ENCODE measurements at regions of chr12 and their contacts with region 1.

Region 1: GRCh38 chr12:11862798-11863197 is 207.9 kb upstream of the BCL2L14 start:
- DNase-seq: peak in 1 of 2 donors; percentile 51
- ATAC-seq: peak; percentile 58 to 82 (median 72)
- H3K4me3 ChIP-seq: peak overlapping the region in 2 of 10 donors; percentile 13 to 14
- H3K27ac ChIP-seq: peak overlapping the region; percentile 59 to 97 (median 86)
- H3K4me1 ChIP-seq: peaks cover 19 to 57% (median 53%) of the 10 kb centered on the region in 9 donors
- H3K27me3 ChIP-seq: no peaks in the 10 kb centered on the region
- CTCF ChIP-seq: no peak

Region 2: DNA sequence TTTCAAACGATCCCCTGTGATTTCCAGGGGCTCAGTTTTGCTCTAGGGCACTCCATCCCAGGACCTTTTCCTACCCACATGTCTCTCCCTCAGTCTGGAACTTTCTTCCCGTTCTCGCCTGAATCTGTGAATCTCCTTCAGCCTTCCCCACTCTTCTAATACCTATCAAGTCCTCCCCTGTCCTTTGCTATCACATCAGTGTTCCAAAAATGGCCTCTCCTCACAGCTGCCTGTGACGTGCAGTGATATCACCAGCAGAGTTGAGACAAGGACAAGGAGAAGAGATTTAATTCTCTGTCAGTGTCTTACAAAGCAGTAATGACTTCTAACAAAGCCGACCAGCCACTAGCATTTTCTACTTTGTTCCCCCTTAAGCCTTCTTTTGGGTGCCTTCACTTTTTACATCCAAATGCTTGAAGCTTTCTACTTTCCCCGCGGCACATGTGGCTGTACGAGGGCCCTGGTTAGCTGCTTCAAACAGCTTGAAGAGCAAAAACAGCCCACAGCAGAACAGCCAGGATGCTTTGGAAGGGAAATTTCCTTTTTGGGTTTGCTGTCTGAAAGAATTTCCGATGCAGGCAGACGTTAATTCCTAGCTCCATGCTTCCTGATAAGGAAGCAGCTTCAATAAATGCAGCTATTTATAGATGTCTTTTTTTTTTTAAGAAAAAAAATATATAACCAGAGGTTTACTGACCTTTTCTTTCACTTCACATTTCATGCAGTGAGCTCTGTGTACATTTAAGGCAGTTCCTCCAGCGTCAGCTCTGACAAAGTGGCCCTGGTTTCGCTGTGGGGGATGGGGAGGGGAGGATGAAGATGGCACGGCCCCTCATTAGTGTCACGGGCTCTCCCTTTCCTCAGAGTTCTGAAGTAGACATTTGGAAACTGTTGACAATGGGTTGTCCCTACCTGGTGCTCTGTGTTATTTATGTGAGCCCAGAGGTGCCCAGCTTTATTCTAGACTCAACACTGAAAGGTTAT is 104.0 kb before region 1 on chr12:
- intact Hi-C with region 1: loop called in 1 of 10 experiments (anchors 5 kb)
- DNase-seq: peak in 1 of 2 donors; percentile 67
- ATAC-seq: peak; percentile 63 to 83 (median 79)
- H3K4me3 ChIP-seq: peak overlapping the region in 2 of 10 donors; percentile 2 to 5
- H3K27ac ChIP-seq: peak overlapping the region; percentile 72 to 92 (median 88)
- H3K4me1 ChIP-seq: peaks cover 13 to 91% (median 86%) of the 10 kb centered on the region in 9 donors
- H3K27me3 ChIP-seq: no peaks in the 10 kb centered on the region
- CTCF ChIP-seq: no peak

Region 3: GRCh38 chr12:11765817-11766794 is 96.7 kb before region 1 on chr12:
- intact Hi-C with region 1: loop called in 2 of 10 experiments (anchors 5 kb)
- DNase-seq: peak in 1 of 2 donors; percentile 67
- ATAC-seq: peak; percentile 59 to 85 (median 78)
- H3K4me3 ChIP-seq: peak overlapping the region in 4 of 10 donors; percentile 5 to 21 (median 12)
- H3K27ac ChIP-seq: peak overlapping the region; percentile 5 to 94 (median 80)
- H3K4me1 ChIP-seq: peaks cover 8 to 100% (median 66%) of the 10 kb centered on the region in 9 donors
- H3K27me3 ChIP-seq: no peaks in the 10 kb centered on the region
- CTCF ChIP-seq: no peak

Region 4: DNA sequence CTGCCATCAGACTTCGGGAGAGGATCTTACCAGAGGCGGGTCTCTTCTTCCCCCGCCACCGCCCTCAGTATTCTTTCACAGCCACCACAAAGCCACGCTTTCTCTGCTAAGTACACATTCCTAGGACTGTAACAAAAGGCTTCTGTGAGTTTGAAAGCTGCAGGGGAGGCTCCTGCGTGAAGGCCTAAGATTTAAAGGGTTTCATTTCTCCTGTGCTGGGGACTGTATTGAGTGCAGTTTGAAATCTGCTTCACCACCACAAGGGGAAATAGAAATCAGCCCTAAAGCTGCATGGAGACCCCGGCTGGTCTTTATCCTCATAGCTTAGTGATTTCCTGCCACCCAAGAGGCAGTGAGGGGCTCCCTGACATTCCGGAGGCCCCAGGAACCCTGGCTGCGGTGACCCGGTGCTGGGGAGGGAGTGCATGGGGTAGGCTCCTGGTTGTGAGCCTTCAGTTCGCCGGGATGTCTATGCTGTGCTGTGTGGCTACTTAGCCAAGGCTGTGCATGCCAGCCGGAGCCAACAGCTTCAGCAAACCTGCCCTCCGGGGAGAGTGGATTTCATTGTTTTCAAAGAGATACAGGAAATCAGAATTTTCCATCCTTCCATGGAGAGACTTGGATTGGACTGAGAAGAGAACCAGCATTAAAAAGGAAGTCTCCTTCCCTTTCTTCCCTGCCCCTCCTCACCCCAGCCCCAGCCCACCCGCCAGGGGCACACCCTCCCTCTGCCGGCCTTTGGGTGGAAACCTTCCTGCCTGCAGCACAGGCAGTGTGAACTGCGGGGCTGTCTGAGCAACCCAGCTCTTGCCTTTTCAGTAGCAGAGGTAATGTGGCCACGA is 50.0 kb before region 1 on chr12:
- intact Hi-C with region 1: loop called in 1 of 10 experiments (anchors 10 kb)
- DNase-seq: peak; percentile 39 to 53
- ATAC-seq: peak; percentile 50 to 84 (median 78)
- H3K4me3 ChIP-seq: peak overlapping the region in 7 of 10 donors; percentile 21 to 40 (median 34)
- H3K27ac ChIP-seq: peak overlapping the region; percentile 62 to 91 (median 78)
- H3K4me1 ChIP-seq: peaks cover 24 to 71% (median 52%) of the 10 kb centered on the region in 9 donors
- H3K27me3 ChIP-seq: no peaks in the 10 kb centered on the region
- CTCF ChIP-seq: peak in 6 of 9 donors; percentile 13 to 34 (median 30)

Region 5: GRCh38 chr12:11827091-11828061 is 35.4 kb before region 1 on chr12:
- intact Hi-C with region 1: loop called in 1 of 10 experiments (anchors 5 kb)
- DNase-seq: no peak
- ATAC-seq: peak in 2 of 8 donors; percentile 28 to 36
- H3K4me3 ChIP-seq: no peak overlapping the region
- H3K27ac ChIP-seq: peak overlapping the region in 4 of 10 donors; percentile 6 to 89 (median 48)
- H3K4me1 ChIP-seq: peaks cover 23 to 91% (median 53%) of the 10 kb centered on the region in 9 donors
- H3K27me3 ChIP-seq: no peaks in the 10 kb centered on the region
- CTCF ChIP-seq: no peak

Measured in heart right ventricle (tissue), 16 donors.